ENCODE measurements at regions of chr16 and their contacts with region 1.

Region 1: DNA sequence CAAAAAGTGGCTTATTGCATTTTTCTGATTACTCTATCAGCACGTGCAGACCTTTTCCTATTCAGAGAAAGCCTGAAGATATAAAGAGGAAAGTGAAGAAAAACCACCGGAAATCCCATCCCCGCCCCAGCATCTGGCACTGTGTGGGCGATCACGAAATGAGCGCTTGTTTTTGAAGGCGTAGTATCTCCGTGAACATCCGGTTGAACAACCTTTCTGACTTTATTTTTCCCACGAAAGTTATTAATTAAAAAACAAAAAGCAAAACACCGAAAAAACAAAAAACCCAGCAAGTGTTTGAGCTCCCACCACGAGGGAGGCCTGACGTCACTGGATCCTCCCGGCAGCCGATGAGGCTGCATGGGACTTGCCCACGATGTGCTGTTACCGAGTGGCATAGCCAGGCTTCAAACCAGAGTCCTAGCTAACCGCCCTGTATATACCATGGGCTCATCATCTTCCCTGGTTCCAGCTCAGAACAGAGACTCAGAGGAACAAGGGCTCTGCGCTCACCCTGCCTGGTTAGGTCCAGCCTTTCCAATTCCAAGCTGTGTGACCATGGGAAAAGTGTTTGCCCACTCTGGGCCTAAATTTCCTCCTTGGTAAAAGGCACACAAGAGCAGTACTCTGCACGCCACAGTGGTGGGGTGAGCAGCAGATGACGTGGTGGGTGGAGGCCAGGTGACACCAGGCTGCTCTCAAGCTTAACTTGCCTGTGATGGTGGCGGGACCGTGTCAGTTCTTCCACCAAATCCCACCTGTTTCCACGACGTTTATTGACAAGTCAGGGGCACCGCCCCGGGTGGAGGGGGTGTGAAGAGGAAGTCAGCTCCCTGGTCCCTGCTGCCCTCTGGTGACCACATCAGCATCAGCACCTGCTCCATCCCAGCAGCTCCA is 34.3 kb upstream of the IL21R start:
- DNase-seq: peak; percentile 89
- H3K4me3 Mint-ChIP-seq: peak overlapping the region; percentile 42
- H3K27ac Mint-ChIP-seq: peak overlapping the region; percentile 68
- H3K4me1 Mint-ChIP-seq: peaks cover 27% of the 10 kb centered on the region
- H3K27me3 Mint-ChIP-seq: no peaks in the 10 kb centered on the region
- CTCF ChIP-seq: peak; percentile 92

Region 2: GRCh38 chr16:27109666-27110523 is 257.8 kb before region 1 on chr16:
- CTCF ChIA-PET with region 1: interaction called, 11 read pairs
- intact Hi-C with region 1: loop called (anchors 5 kb)
- DNase-seq: peak; percentile 91
- H3K4me3 Mint-ChIP-seq: peak overlapping the region; percentile 43
- H3K27ac Mint-ChIP-seq: peak overlapping the region; percentile 40
- H3K4me1 Mint-ChIP-seq: no peaks in the 10 kb centered on the region
- H3K27me3 Mint-ChIP-seq: peaks cover 62% of the 10 kb centered on the region
- CTCF ChIP-seq: peak; percentile 96

Region 3: DNA sequence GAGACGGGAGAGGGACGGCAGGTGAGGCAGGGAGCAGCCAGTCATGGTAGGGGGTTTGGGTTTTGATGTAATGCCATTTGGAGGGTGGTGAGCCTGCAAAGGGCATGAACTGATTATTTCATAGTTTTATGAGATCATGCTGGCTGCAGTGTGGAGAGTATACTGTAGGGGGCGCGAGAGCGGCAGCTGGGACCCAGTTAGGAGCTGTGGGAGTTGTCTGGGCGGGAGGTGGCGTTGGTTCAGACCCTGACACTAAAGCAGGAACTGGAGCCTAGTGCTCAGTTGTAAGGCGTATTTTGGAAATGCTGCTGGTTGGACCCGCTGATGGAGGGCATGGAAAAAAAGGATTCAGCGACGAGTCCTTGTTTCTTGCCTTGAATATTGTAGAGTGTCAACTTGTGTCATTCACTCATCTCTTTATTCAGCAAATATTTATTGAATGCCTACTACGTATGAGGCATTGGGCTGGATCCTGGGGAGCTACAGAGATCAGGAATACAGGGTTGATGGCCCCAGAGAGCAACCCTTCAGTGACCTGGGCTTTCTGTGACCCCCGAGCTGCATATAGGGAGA is 188.1 kb before region 1 on chr16:
- CTCF ChIA-PET with region 1: interaction called, 23 read pairs
- intact Hi-C with region 1: loop called (anchors 2 kb)
- DNase-seq: peak; percentile 75
- H3K4me3 Mint-ChIP-seq: no peak overlapping the region
- H3K27ac Mint-ChIP-seq: no peak overlapping the region
- H3K4me1 Mint-ChIP-seq: peaks cover 7% of the 10 kb centered on the region
- H3K27me3 Mint-ChIP-seq: peaks cover 52% of the 10 kb centered on the region
- CTCF ChIP-seq: peak; percentile 68

Region 4: DNA sequence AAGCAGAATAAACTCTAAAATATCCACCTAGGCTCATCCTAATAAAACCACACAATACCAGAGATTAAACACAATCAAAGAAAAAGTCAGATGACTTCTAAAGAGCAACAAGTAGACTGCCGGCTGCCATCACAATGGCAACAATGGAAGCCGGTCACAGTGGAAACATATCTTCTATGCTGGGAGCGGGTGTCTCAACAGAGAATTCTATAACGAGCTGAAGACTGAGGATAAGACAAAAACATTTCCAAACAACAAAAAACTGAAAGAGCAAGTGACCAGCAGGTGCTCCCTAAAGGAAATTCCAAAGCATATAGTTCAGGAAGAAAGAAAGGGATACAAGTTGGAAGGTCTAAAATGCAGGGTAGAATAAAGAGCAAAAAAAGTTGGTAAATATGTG is 108.0 kb before region 1 on chr16:
- CTCF ChIA-PET with region 1: interaction called, 3 read pairs
- intact Hi-C with region 1: loop called (anchors 2 kb)
- DNase-seq: no peak
- H3K4me3 Mint-ChIP-seq: no peak overlapping the region
- H3K27ac Mint-ChIP-seq: no peak overlapping the region
- H3K4me1 Mint-ChIP-seq: peaks cover 59% of the 10 kb centered on the region
- H3K27me3 Mint-ChIP-seq: no peaks in the 10 kb centered on the region
- CTCF ChIP-seq: no peak

Region 5: GRCh38 chr16:27313422-27314160 is 54.1 kb before region 1 on chr16 and contains the start of gene IL4R:
- CTCF ChIA-PET with region 1: interaction called, 10 read pairs
- intact Hi-C with region 1: loop called (anchors 2 kb)
- DNase-seq: peak; percentile 82
- H3K4me3 Mint-ChIP-seq: peak within 1 kb of the TSS; percentile 82
- H3K27ac Mint-ChIP-seq: peak within 1 kb of the TSS; percentile 80
- H3K4me1 Mint-ChIP-seq: peaks cover 58% of the 10 kb centered on the region
- H3K27me3 Mint-ChIP-seq: no peaks in the 10 kb centered on the region
- CTCF ChIP-seq: no peak
- total RNA-seq, gene IL4R: 99.0 and 108 TPM in 2 replicates